GM12878 (cell line): ENCODE measurements at regions of chr12 and their contacts with region 1.

Region 1: GRCh38 chr12:46124848-46125619 is 134.7 kb upstream of the SCAF11 start:
- DNase-seq: no peak
- ATAC-seq: peak; percentile 96
- H3K4me3 ChIP-seq: no peak overlapping the region
- H3K27ac ChIP-seq: no peak overlapping the region
- H3K4me1 ChIP-seq: no peaks in the 10 kb centered on the region
- H3K27me3 ChIP-seq: no peaks in the 10 kb centered on the region; a peak in 1 of 4 replicates
- CTCF ChIP-seq: peak; percentile 58 to 74 (median 61); a peak in 5 of 6 replicates
- EP300 ChIP-seq: no peak
- POLR2A ChIP-seq: no peak
- RAD21 ChIP-seq: peak; percentile 84

Region 2: DNA sequence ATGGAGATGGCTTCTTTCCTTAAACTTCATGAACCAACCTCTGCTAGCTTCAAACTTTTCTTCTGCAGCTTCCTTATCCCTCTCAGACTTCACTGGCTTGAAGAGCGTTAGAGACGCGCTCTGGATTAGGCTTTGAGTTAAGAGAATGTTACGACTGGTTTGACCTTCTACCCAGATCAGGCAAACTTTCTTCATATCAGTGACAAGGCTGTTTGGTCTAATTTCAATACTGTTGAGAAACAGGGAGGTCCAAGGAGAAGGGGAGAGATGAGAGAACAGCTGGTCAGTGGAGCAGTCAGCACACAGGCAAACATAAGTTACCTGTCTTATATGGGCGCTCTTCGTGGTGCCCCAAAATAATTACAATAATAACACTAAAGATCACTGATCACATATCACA is 149.5 kb before region 1 on chr12:
- CTCF ChIA-PET with region 1: no interaction called
- POLR2A ChIA-PET with region 1: no interaction called
- RAD21 ChIA-PET with region 1: no interaction called
- SMC1A ChIA-PET with region 1: no interaction called
- in situ Hi-C with region 1: no loop called
- intact Hi-C with region 1: no loop called
- DNase-seq: no peak
- ATAC-seq: no peak
- H3K4me3 ChIP-seq: no peak overlapping the region
- H3K27ac ChIP-seq: no peak overlapping the region
- H3K4me1 ChIP-seq: peaks cover 3% of the 10 kb centered on the region; the same call in 1 of the 2 replicates
- H3K27me3 ChIP-seq: no peaks in the 10 kb centered on the region
- CTCF ChIP-seq: no peak
- EP300 ChIP-seq: no peak
- POLR2A ChIP-seq: no peak
- RAD21 ChIP-seq: no peak

Region 3: GRCh38 chr12:46108721-46109120 is 16.3 kb before region 1 on chr12:
- CTCF ChIA-PET with region 1: interaction called, 46 read pairs
- POLR2A ChIA-PET with region 1: interaction called, 3 read pairs
- RAD21 ChIA-PET with region 1: interaction called, 12 read pairs
- SMC1A ChIA-PET with region 1: interaction called, 32 read pairs
- in situ Hi-C with region 1: no loop called
- intact Hi-C with region 1: no loop called
- DNase-seq: peak; percentile 80
- ATAC-seq: peak; percentile 88
- H3K4me3 ChIP-seq: 0 out of 2 replicates have a peak overlapping the region, but pooled peaks have one; percentile 5
- H3K27ac ChIP-seq: peak overlapping the region; percentile 60; the same call in 1 of the 2 replicates
- H3K4me1 ChIP-seq: peaks cover 30% of the 10 kb centered on the region
- H3K27me3 ChIP-seq: no peaks in the 10 kb centered on the region
- CTCF ChIP-seq: no peak
- EP300 ChIP-seq: peak; percentile 82 to 95
- POLR2A ChIP-seq: no peak
- RAD21 ChIP-seq: no peak

Region 4: GRCh38 chr12:46179683-46180452 is 54.8 kb after region 1 on chr12:
- CTCF ChIA-PET with region 1: interaction called, 11 read pairs
- POLR2A ChIA-PET with region 1: no interaction called
- RAD21 ChIA-PET with region 1: interaction called, 22 read pairs
- SMC1A ChIA-PET with region 1: interaction called, 6 read pairs
- in situ Hi-C with region 1: no loop called
- intact Hi-C with region 1: no loop called
- DNase-seq: peak; percentile 76
- ATAC-seq: peak; percentile 70
- H3K4me3 ChIP-seq: no peak overlapping the region
- H3K27ac ChIP-seq: peak overlapping the region; percentile 47
- H3K4me1 ChIP-seq: peaks cover 34% of the 10 kb centered on the region
- H3K27me3 ChIP-seq: no peaks in the 10 kb centered on the region
- CTCF ChIP-seq: no peak
- EP300 ChIP-seq: peak; percentile 78 to 85; a peak in 3 of 4 replicates
- POLR2A ChIP-seq: no peak
- RAD21 ChIP-seq: no peak

Region 5: DNA sequence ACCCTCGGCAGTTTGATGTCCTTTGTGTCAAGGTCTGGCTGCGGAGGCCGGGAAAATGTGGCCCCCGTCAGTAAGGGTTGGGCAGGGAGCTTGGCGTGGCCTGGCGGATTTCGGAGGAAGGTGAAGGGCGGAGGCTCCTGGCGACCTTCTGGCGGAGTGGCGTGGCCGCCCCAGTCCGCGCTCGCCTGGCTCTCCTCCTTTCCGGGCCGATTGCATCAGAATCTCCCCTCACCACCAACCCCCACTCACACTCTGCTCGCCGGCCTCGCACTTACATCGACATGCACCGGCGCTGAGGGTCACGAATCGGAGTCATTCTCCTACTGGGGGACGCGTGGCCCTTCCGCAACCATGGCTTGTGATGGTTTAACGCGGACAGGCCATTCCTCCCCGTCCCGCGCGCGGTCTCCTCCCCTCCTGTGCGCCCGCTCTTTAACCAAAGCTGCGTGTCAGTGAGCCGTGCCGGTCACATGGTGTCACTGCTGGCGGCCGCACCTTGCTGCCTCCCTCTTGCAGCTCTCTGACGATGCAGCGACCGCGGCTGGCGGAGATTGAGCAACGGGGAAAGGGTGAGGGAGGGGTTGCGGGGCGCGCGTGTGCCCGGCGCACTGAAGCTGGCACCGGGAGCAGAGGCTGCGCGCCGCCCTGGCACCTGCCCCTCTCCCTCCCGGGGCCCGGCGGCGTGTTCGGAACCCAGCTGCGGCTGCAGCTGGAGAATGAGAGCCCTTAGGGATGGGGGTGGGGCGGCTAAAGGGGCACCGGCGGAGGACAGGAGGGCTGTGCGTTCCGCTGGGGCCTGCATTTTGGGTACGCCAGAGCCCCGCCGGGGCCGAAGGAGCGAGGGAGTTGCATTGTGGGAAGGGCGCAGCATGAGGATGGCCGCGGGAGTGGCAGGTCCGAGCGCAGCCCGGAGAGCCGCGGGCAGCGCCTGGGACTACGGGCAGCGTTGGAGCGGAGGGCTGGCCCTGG is 143.8 kb after region 1 on chr12 and contains the start of gene SLC38A1:
- CTCF ChIA-PET with region 1: interaction called, 30 read pairs
- POLR2A ChIA-PET with region 1: no interaction called
- RAD21 ChIA-PET with region 1: interaction called, 23 read pairs
- SMC1A ChIA-PET with region 1: interaction called, 25 read pairs
- in situ Hi-C with region 1: no loop called
- intact Hi-C with region 1: no loop called
- DNase-seq: no peak
- ATAC-seq: peak; percentile 75
- H3K4me3 ChIP-seq: peak within 1 kb of the TSS; percentile 82
- H3K27ac ChIP-seq: peak within 1 kb of the TSS; percentile 95
- H3K4me1 ChIP-seq: peaks cover 8% of the 10 kb centered on the region; the same call in 1 of the 2 replicates
- H3K27me3 ChIP-seq: no peaks in the 10 kb centered on the region
- CTCF ChIP-seq: peak in 1 of 3 experiments; percentile 11; a peak in 2 of 6 replicates
- EP300 ChIP-seq: no peak; a peak in 1 of 4 replicates
- POLR2A ChIP-seq: peak; percentile 97
- RAD21 ChIP-seq: peak; percentile 31; the same call in 1 of the 2 replicates
- polyA plus RNA-seq, gene SLC38A1: 38.1 to 64.0 TPM

Region 6: GRCh38 chr12:46661110-46661845 is 536.2 kb after region 1 on chr12:
- CTCF ChIA-PET with region 1: interaction called, 13 read pairs
- POLR2A ChIA-PET with region 1: no interaction called
- RAD21 ChIA-PET with region 1: interaction called, 14 read pairs
- SMC1A ChIA-PET with region 1: interaction called, 11 read pairs
- in situ Hi-C with region 1: loop called (anchors 25 kb)
- intact Hi-C with region 1: loop called (anchors 5 kb)
- DNase-seq: peak; percentile 48
- ATAC-seq: peak; percentile 94
- H3K4me3 ChIP-seq: no peak overlapping the region
- H3K27ac ChIP-seq: no peak overlapping the region
- H3K4me1 ChIP-seq: peaks cover 7% of the 10 kb centered on the region
- H3K27me3 ChIP-seq: no peaks in the 10 kb centered on the region
- CTCF ChIP-seq: peak; percentile 77 to 85 (median 83)
- EP300 ChIP-seq: no peak
- POLR2A ChIP-seq: no peak
- RAD21 ChIP-seq: peak; percentile 93

Region 7: GRCh38 chr12:47021298-47021697 is 896.3 kb after region 1 on chr12:
- CTCF ChIA-PET with region 1: interaction called, 49 read pairs
- POLR2A ChIA-PET with region 1: no interaction called
- RAD21 ChIA-PET with region 1: interaction called, 19 read pairs
- SMC1A ChIA-PET with region 1: interaction called, 10 read pairs
- in situ Hi-C with region 1: loop called (anchors 25 kb)
- intact Hi-C with region 1: loop called (anchors 2 kb)
- DNase-seq: peak; percentile 11
- ATAC-seq: peak; percentile 78
- H3K4me3 ChIP-seq: no peak overlapping the region
- H3K27ac ChIP-seq: no peak overlapping the region
- H3K4me1 ChIP-seq: no peaks in the 10 kb centered on the region
- H3K27me3 ChIP-seq: no peaks in the 10 kb centered on the region
- CTCF ChIP-seq: peak; percentile 50 to 68 (median 66)
- EP300 ChIP-seq: no peak
- POLR2A ChIP-seq: no peak
- RAD21 ChIP-seq: peak; percentile 80